Calu3 (cell line): ENCODE measurements at regions of chr6 and their contacts with region 1.

Region 1: GRCh38 chr6:3251462-3252314 is 7.1 kb upstream of the PSMG4 start:
- DNase-seq: peak; percentile 86
- H3K4me3 Mint-ChIP-seq: peak overlapping the region; percentile 32
- H3K27ac Mint-ChIP-seq: no peak overlapping the region
- H3K4me1 Mint-ChIP-seq: peaks cover 18% of the 10 kb centered on the region
- H3K27me3 Mint-ChIP-seq: peaks cover 50% of the 10 kb centered on the region
- CTCF ChIP-seq: peak; percentile 91

Region 2: GRCh38 chr6:3125815-3126214 is 125.9 kb before region 1 on chr6:
- CTCF ChIA-PET with region 1: no interaction called
- intact Hi-C with region 1: loop called (anchors 1 kb)
- DNase-seq: no peak
- H3K4me3 Mint-ChIP-seq: no peak overlapping the region
- H3K27ac Mint-ChIP-seq: no peak overlapping the region
- H3K4me1 Mint-ChIP-seq: no peaks in the 10 kb centered on the region
- H3K27me3 Mint-ChIP-seq: no peaks in the 10 kb centered on the region
- CTCF ChIP-seq: no peak

Region 3: DNA sequence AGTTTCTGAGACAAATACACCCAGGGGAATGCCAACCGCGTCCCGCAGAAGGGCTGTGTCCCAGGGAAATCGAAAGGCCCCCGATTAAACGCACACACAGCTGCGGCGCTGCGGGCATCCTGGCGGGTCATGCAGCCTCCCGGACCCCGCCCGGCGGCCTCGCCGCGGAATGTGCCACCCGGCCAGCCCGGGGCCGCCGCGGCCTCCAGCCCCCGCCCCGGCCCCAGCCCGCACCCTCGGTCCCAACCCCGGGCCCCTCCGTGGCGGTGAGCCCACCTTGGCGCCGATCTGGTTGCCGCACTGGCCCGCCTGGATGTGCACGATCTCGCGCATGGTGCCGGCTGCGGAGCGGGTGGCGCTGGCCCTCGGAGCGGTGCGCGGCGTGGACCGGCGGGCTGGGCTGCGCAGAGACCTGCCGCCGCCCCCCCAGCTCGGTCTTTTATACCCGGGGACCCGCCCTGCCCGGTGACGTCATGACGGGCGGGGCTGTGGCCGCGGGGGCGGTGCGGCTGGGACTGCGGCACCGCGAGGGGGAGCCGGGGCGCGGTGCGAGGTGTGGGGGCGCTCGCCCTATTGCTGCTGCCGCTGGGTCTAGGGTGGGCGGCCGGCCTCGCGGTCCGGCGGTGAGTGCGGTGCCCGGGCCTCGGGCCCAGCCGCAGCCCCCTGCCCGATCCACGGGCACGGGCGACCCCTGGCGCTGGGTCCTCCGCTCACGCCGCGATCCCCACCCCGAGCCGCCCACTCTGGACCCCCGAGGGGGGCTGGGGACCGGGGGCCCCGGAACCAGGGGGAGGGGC is 94.4 kb before region 1 on chr6 and contains the start of gene TUBB2A:
- CTCF ChIA-PET with region 1: interaction called, 10 read pairs
- intact Hi-C with region 1: no loop called
- DNase-seq: peak; percentile 84
- H3K4me3 Mint-ChIP-seq: peak within 1 kb of the TSS; percentile 68
- H3K27ac Mint-ChIP-seq: peak within 1 kb of the TSS; percentile 81
- H3K4me1 Mint-ChIP-seq: peaks cover 10% of the 10 kb centered on the region
- H3K27me3 Mint-ChIP-seq: no peaks in the 10 kb centered on the region
- CTCF ChIP-seq: peak; percentile 56
- total RNA-seq, gene TUBB2A: 16.0 and 17.6 TPM in 2 replicates

Region 4: GRCh38 chr6:3186974-3187382 is 64.7 kb before region 1 on chr6:
- CTCF ChIA-PET with region 1: no interaction called
- intact Hi-C with region 1: no loop called
- DNase-seq: no peak
- H3K4me3 Mint-ChIP-seq: no peak overlapping the region
- H3K27ac Mint-ChIP-seq: no peak overlapping the region
- H3K4me1 Mint-ChIP-seq: no peaks in the 10 kb centered on the region
- H3K27me3 Mint-ChIP-seq: peaks cover 15% of the 10 kb centered on the region
- CTCF ChIP-seq: no peak

Region 5: DNA sequence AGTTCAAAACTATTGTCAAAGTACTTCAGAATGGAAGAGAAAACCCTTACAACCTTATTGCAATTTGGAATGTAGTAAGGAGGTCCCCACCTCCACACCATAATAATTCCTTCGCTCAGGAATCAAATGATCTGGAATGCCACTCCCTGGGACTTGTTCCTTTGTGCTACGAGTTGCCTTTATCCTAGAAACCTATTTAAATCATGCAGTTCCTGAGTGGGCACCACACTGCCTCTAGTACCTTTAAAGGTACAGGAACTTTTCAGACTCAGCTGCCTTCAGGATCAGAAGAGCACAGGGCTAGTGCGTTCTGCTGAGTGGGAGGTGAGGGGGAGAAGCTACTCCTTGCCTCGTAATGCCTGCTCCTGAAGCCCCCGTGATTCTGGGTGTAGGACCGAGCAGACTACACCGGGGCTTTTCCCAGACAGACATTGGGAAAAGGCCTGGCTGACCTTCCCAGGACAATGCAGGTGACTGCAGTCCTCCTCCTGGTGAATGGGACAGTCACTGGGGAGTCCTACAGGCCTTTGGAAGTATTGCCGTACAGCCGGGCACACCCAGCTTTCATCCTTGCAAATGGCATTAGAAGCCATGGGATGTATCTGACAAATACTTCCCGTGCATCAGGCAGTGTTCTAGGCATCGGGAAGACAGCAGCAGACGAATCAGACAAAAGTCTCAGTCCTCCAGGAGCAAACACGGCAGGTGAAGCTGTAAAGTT is 12.4 kb before region 1 on chr6:
- CTCF ChIA-PET with region 1: no interaction called
- intact Hi-C with region 1: no loop called
- DNase-seq: no peak
- H3K4me3 Mint-ChIP-seq: no peak overlapping the region
- H3K27ac Mint-ChIP-seq: no peak overlapping the region
- H3K4me1 Mint-ChIP-seq: no peaks in the 10 kb centered on the region
- H3K27me3 Mint-ChIP-seq: peaks cover 75% of the 10 kb centered on the region
- CTCF ChIP-seq: no peak